ENCODE measurements at regions of chr6 and their contacts with region 1.

Region 1: GRCh38 chr6:25053875-25054371 is 118.2 kb upstream of the RIPOR2 start:
- DNase-seq: peak in 4 of 14 experiments; percentile 14 to 75 (median 66)
- ATAC-seq: no peak
- H3K4me3 ChIP-seq: no peak overlapping the region
- H3K4me3 Mint-ChIP-seq: no peak overlapping the region
- H3K27ac ChIP-seq: peak overlapping the region in 1 of 2 donors; percentile 19
- H3K27ac Mint-ChIP-seq: peak overlapping the region; percentile 40
- H3K4me1 ChIP-seq: peaks cover 76% of the 10 kb centered on the region
- H3K4me1 Mint-ChIP-seq: peaks cover 72% of the 10 kb centered on the region
- H3K27me3 ChIP-seq: no peaks in the 10 kb centered on the region
- H3K27me3 Mint-ChIP-seq: no peaks in the 10 kb centered on the region
- CTCF ChIP-seq: no peak

Region 2: GRCh38 chr6:24032896-24033688 is 1020.8 kb before region 1 on chr6:
- CTCF ChIA-PET with region 1: no interaction called
- POLR2A ChIA-PET with region 1: no interaction called
- intact Hi-C with region 1: no loop called
- DNase-seq: no peak
- ATAC-seq: no peak
- H3K4me3 ChIP-seq: no peak overlapping the region
- H3K4me3 Mint-ChIP-seq: no peak overlapping the region
- H3K27ac ChIP-seq: no peak overlapping the region
- H3K27ac Mint-ChIP-seq: no peak overlapping the region
- H3K4me1 ChIP-seq: no peaks in the 10 kb centered on the region
- H3K4me1 Mint-ChIP-seq: no peaks in the 10 kb centered on the region
- H3K27me3 ChIP-seq: no peaks in the 10 kb centered on the region
- H3K27me3 Mint-ChIP-seq: no peaks in the 10 kb centered on the region
- CTCF ChIP-seq: no peak

Region 3: GRCh38 chr6:25042036-25042521 is 11.8 kb before region 1 on chr6:
- CTCF ChIA-PET with region 1: interaction called, 9 read pairs
- POLR2A ChIA-PET with region 1: interaction called, 14 read pairs
- intact Hi-C with region 1: loop called in 1 of 2 experiments (anchors 1 kb)
- DNase-seq: peak in 13 of 14 experiments; percentile 27 to 85 (median 55)
- ATAC-seq: peak; percentile 73
- H3K4me3 ChIP-seq: peak overlapping the region; percentile 71
- H3K4me3 Mint-ChIP-seq: peak overlapping the region; percentile 92
- H3K27ac ChIP-seq: peak overlapping the region; percentile 76 to 83
- H3K27ac Mint-ChIP-seq: peak overlapping the region; percentile 96
- H3K4me1 ChIP-seq: peaks cover 50% of the 10 kb centered on the region
- H3K4me1 Mint-ChIP-seq: peaks cover 56% of the 10 kb centered on the region
- H3K27me3 ChIP-seq: no peaks in the 10 kb centered on the region
- H3K27me3 Mint-ChIP-seq: no peaks in the 10 kb centered on the region
- CTCF ChIP-seq: no peak

Region 4: DNA sequence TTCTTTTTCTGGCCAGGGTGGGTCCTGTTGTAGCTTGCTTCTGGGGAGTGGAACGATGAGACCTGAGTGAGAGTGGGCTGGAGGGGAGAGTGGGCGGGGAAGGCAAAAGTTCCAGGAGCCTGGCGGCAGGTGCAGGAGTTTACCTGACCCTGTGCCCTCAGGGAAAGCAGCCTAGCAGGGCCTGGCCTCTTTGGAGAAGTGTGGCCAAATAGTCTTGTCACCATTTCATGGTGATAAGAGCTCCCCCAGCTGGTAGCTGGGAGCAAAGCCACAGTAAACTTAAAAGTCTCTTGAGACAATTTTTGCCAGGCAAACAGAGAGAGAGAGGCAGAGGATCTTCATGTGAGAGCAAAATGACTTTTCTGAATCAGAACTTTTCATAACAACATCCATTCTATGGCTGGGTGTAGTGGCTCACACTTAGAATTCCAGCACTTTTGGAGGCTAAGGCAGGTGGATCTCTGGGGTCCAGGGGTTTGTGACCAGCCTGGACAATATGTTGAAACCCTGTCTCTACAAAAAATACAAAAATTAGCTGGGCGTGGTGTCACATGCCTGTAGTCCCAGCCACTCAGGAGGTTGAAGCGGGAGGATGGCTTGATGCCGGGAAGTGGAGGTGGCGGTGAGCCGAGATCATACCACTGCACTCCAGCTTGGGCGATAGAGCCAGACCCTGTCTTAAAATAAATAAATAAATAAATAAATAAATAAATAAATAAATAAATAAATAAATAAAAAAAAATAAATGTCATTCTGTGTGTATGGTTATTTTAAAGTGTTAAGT is 436.3 kb after region 1 on chr6:
- CTCF ChIA-PET with region 1: no interaction called
- POLR2A ChIA-PET with region 1: no interaction called
- intact Hi-C with region 1: no loop called
- DNase-seq: peak; percentile 39 to 82 (median 58)
- ATAC-seq: peak; percentile 82
- H3K4me3 ChIP-seq: no peak overlapping the region
- H3K4me3 Mint-ChIP-seq: no peak overlapping the region
- H3K27ac ChIP-seq: no peak overlapping the region
- H3K27ac Mint-ChIP-seq: peak overlapping the region; percentile 8
- H3K4me1 ChIP-seq: peaks cover 7% of the 10 kb centered on the region
- H3K4me1 Mint-ChIP-seq: peaks cover 8% of the 10 kb centered on the region
- H3K27me3 ChIP-seq: no peaks in the 10 kb centered on the region
- H3K27me3 Mint-ChIP-seq: no peaks in the 10 kb centered on the region
- CTCF ChIP-seq: peak; percentile 88

Measured in CD4-positive, alpha-beta T cell (primary cell).